PC-3 (cell line): ENCODE measurements at regions of chr15 and their contacts with region 1.

Region 1: GRCh38 chr15:60390871-60391501 is 6.8 kb downstream of the ANXA2 start:
- DNase-seq: peak; percentile 77
- ATAC-seq: peak; percentile 38
- H3K4me3 ChIP-seq: peak overlapping the region; percentile 67
- H3K27ac ChIP-seq: peak overlapping the region; percentile 98
- H3K4me1 ChIP-seq: peaks cover 82% of the 10 kb centered on the region
- H3K27me3 ChIP-seq: no peaks in the 10 kb centered on the region
- CTCF ChIP-seq: no peak; the same call in 1 of the 2 replicates

Region 2: GRCh38 chr15:60204131-60204885 is 186.7 kb before region 1 on chr15:
- CTCF ChIA-PET with region 1: no interaction called
- POLR2A ChIA-PET with region 1: no interaction called
- intact Hi-C with region 1: no loop called
- DNase-seq: no peak
- ATAC-seq: no peak
- H3K4me3 ChIP-seq: no peak overlapping the region
- H3K27ac ChIP-seq: no peak overlapping the region
- H3K4me1 ChIP-seq: no peaks in the 10 kb centered on the region
- H3K27me3 ChIP-seq: peaks cover 91% of the 10 kb centered on the region
- CTCF ChIP-seq: no peak

Region 3: GRCh38 chr15:60358935-60359682 is 31.9 kb before region 1 on chr15:
- CTCF ChIA-PET with region 1: no interaction called
- POLR2A ChIA-PET with region 1: interaction called, 4 read pairs
- intact Hi-C with region 1: loop called (anchors 2 kb)
- DNase-seq: no peak
- ATAC-seq: no peak
- H3K4me3 ChIP-seq: no peak overlapping the region
- H3K27ac ChIP-seq: peak overlapping the region; percentile 3; the same call in 1 of the 2 replicates
- H3K4me1 ChIP-seq: peaks cover 25% of the 10 kb centered on the region
- H3K27me3 ChIP-seq: no peaks in the 10 kb centered on the region
- CTCF ChIP-seq: no peak